ENCODE measurements at regions of chr17 and their contacts with region 1.

Region 1: DNA sequence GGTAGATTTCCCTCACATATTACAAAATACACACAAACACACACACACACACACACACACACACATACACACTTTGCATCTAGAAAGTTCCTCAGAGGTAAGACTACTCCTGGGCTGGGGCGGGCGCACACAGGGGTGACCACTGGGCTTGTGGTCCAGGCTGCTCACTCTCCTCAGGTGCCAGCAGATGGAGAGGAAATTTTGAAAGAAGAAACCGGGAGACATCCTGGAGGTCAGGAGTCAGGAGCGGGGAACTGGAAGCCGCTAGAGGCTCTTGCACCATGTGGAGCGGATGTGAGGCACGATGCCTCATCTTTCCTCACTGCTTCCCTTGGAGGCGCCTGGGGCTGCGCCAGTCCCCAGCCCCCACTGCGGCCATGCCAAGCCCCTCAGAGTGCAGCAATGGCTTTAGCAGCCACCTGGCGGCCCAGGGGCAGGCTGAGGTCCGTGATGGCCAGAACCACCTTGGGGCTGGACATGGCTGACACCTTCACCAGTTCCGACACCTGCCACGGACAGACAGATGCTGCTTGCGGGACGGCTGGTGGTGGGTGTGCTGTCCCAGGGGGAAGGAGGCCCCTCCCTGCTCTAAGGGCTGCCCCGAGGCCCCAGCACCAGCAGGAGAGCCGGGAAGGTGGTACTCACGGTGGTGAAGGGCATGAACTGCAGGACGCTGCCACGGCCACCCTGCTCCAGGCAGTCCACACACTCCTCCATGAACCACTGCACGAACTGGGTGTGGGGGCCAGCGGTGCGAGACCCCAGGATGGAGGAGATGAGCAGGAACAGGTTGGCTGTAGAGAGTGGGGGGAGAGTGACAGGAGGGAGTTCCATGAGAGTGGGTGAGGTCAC is 4.1 kb downstream of the CSF3 start:
- DNase-seq: no peak
- ATAC-seq: peak in 1 of 4 donors; percentile 2
- H3K4me3 ChIP-seq: no peak overlapping the region
- H3K27ac ChIP-seq: no peak overlapping the region
- H3K4me1 ChIP-seq: peaks cover 0 to 7% (median 0%) of the 10 kb centered on the region in 4 donors
- H3K27me3 ChIP-seq: no peaks in the 10 kb centered on the region
- CTCF ChIP-seq: no peak
- POLR2A ChIP-seq: no peak

Region 2: GRCh38 chr17:40075201-40075941 is 56.0 kb after region 1 on chr17:
- intact Hi-C with region 1: loop called (anchors 10 kb)
- DNase-seq: peak; percentile 57 to 74 (median 71)
- ATAC-seq: peak; percentile 78 to 87 (median 80)
- H3K4me3 ChIP-seq: no peak overlapping the region
- H3K27ac ChIP-seq: peak overlapping the region in 2 of 3 donors; percentile 5 to 16
- H3K4me1 ChIP-seq: peaks cover 2 to 38% (median 22%) of the 10 kb centered on the region in 4 donors
- H3K27me3 ChIP-seq: no peaks in the 10 kb centered on the region
- CTCF ChIP-seq: peak; percentile 77 to 90 (median 82)
- POLR2A ChIP-seq: no peak

Region 3: DNA sequence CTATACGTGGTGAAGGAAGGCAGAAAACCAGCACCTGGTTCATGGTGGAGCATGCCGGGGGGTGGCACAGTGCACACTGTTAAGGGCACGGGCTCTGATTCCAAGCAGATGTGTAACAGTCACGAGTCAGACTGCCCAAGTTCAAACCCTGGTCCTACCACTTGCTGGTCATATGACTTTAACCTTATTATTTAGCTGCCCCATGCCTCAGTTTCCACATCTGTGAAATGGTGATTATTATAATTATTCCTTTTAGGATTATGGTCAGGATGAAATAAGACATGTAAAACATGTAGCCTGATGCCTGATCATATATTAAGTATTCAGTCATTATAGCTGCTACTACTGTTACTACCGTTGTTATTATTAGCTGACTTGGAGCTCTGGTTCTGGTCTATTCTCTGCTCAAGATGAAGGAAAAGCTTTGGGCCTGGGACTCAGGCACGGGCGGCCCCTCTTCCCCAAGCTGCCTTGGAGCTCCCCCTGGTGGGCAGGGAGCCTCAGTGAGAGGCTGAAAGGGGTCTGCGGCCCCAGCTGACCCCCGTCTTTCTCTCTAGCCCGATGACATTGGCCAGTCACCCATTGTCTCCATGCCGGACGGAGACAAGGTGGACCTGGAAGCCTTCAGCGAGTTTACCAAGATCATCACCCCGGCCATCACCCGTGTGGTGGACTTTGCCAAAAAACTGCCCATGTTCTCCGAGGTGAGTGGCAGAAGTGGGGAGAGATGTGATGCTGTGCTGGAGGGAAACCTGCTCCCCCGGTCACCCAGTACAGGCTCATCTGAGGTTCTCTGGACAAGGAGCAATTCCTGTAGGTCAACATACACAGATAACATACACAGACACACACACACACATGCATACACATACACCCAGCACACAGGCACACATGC is 67.0 kb after region 1 on chr17:
- intact Hi-C with region 1: loop called in 1 of 2 experiments (anchors 10 kb)
- DNase-seq: peak in 1 of 3 donors; percentile 63
- ATAC-seq: peak; percentile 58 to 73 (median 68)
- H3K4me3 ChIP-seq: no peak overlapping the region
- H3K27ac ChIP-seq: no peak overlapping the region
- H3K4me1 ChIP-seq: no peaks in the 10 kb centered on the region
- H3K27me3 ChIP-seq: no peaks in the 10 kb centered on the region
- CTCF ChIP-seq: peak; percentile 71 to 87 (median 82)
- POLR2A ChIP-seq: no peak

Region 4: DNA sequence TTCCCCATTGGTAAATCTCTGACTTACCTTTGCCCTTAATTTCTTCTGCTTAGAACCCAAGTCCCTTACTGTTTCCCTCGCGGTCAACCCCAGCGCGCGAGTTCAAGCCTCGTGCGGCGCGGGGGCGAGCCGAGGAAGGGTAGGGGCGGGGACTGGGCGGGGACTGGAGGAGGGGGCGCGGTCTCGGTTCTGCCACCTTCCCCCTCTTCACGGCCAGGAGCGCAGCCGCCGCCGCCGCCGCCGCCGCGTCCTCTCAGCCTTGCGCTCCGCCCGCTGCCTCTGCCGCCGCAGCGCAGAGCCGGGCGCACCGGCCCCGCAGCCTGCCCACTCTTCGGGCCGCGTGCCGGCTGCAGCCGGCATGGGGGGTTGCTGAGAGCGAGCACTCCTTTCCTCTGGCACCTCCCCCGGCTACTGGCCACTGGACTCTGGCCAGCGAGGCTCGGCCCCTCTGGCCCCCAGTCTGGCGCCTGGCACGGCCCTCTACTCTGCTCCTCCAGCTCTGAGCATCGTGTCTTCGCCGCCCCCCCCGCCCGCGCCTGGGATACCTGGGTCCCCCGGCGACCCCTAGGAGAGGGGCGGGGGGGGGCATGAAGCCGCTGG is 158.0 kb after region 1 on chr17 and contains the start of gene RAPGEFL1:
- intact Hi-C with region 1: loop called in 1 of 2 experiments (anchors 10 kb)
- DNase-seq: peak; percentile 84 to 89 (median 87)
- ATAC-seq: peak; percentile 83 to 87 (median 86)
- H3K4me3 ChIP-seq: peak within 1 kb of the TSS; percentile 49 to 65 (median 56)
- H3K27ac ChIP-seq: peak within 1 kb of the TSS in 1 of 3 donors; percentile 37
- H3K4me1 ChIP-seq: peaks cover 0 to 36% (median 14%) of the 10 kb centered on the region in 4 donors
- H3K27me3 ChIP-seq: no peaks in the 10 kb centered on the region
- CTCF ChIP-seq: no peak
- POLR2A ChIP-seq: peak; percentile 37
- total RNA-seq, gene RAPGEFL1: 1.4 to 16.5 (median 4.4) TPM

Region 5: DNA sequence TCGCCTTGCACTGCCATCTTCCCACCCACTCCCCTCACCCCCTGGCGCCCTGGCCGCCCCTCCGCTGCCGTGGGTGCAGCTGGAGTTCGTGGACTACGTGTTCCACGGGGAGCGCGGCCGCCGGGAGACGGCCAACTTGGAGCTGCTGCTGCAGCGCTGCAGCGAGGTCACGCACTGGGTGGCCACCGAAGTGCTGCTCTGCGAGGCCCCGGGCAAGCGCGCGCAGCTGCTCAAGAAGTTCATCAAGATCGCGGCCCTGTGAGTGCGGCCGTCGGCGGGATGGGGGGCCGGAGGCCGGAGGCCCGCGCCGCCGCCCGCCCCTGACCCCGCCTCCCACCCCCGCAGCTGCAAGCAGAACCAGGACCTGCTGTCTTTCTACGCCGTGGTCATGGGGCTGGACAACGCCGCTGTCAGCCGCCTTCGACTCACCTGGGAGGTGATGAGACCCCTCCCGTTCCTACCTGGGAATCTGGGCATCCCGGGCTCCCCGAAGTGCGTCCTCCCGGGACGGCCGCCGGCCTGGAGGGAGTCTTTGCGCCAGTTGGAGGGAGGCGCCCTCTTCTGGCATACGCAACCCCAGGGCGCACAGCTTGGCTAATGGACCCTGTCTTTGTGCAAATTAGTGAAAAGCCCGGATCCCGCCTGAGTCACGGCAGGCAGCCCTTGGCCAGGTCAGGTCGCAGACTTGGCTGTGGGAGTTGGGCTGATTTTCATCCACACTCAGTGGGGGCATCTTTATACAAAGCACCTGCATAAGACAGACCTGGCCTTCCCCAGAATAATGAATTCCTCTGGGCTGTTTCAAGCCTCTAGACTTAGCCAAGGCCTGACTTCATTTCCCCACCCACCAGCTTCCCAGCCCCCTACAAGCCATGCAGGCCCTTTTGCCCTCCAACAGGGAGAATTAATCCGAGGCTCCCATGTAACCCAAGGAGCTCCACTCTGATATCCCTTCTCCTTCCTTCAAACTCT is 172.2 kb after region 1 on chr17:
- intact Hi-C with region 1: loop called in 1 of 2 experiments (anchors 10 kb)
- DNase-seq: peak; percentile 80 to 86 (median 83)
- ATAC-seq: peak; percentile 87 to 96 (median 92)
- H3K4me3 ChIP-seq: peak overlapping the region; percentile 42 to 62 (median 53)
- H3K27ac ChIP-seq: peak overlapping the region in 1 of 3 donors; percentile 12
- H3K4me1 ChIP-seq: no peaks in the 10 kb centered on the region
- H3K27me3 ChIP-seq: no peaks in the 10 kb centered on the region
- CTCF ChIP-seq: peak; percentile 53 to 81 (median 79)
- POLR2A ChIP-seq: no peak

Region 6: DNA sequence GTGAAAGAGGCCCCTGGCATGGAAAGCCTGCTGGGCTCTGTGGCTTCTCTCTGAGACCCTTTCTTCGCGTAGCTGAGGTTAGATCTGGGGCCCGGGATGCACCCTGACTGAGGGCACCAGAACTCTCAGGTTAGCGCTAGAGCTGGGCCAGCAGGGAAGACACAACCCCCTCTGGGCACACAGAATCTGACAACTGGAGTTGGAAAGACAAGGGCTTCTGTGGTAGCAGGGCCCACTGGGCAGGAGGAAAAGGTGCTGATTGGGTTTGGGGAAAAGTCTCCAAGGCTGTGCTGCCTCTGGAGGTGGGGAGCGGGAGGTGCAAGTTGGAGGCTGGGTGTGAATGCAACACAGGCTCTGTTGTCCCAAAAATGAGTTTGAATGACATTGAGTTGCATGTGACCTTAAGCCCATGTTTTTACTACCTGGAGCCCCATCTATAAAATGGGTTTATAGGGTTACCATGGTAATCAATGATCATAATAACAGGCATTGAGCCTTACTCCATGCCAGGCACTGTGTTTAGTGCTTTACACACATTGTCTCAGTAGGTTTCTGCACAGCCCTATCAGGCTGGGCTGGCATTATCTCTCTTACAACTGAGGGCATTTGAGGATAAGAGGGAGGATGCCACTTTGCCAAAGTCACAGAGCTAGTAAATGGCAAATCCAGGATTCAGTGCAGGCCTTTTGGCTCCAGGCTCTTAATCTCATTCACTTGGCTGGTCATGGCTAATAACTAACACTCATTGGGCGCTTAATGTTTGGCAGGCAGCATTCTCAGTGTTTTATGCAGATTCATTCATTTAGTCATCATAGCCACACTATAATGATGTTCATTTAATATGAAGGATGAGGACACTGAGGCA is 414.4 kb after region 1 on chr17:
- intact Hi-C with region 1: no loop called
- DNase-seq: peak in 1 of 3 donors; percentile 50
- ATAC-seq: peak; percentile 49 to 67 (median 56)
- H3K4me3 ChIP-seq: no peak overlapping the region
- H3K27ac ChIP-seq: no peak overlapping the region
- H3K4me1 ChIP-seq: no peaks in the 10 kb centered on the region
- H3K27me3 ChIP-seq: no peaks in the 10 kb centered on the region
- CTCF ChIP-seq: peak; percentile 15 to 46 (median 31)
- POLR2A ChIP-seq: no peak

Measured in right lobe of liver (tissue), 6 donors.